ENCODE measurements at regions of chr3 and their contacts with region 1.

Region 1: DNA sequence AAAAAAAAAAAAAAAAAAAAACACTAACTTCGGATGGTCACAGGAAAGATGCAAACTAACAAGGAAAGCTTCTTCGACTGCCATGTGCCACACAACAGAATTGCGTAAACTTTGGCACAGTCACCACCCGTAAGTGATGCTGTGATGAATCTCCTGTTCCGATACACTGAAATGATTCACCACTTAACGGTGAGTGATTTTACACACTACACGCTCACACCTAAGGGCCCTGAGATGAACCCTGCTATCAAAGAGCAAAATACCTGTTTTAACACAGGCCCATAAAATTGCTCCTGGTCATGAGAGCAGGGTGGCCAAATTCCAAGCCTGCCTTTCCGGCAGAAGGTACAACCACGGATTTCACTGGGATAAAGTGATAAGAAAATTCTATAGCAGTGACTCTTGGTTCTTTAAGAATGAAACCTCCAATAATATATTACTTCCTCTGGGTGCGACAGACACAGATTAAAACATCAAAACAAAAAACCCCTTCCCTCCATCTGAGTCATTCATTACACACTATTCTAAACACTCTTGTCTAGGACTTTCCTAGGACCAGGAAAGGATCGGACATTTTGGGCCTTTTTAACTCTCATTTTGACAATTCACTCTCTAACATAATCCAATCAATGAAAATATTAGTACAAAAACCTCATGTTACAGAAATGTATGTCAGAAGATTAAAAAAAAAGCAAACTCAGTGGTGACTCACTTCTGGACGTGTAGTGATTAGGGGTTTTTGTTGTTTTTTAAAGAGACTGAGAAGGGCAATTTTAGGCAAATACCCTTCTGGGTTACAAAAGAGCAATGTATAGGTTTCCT is 28.3 kb downstream of the LRIG1 start:
- DNase-seq: peak; percentile 38
- H3K4me3 Mint-ChIP-seq: peak overlapping the region; percentile 56
- H3K27ac Mint-ChIP-seq: peak overlapping the region; percentile 89
- H3K4me1 Mint-ChIP-seq: peaks cover 57% of the 10 kb centered on the region
- H3K27me3 Mint-ChIP-seq: no peaks in the 10 kb centered on the region

Region 2: GRCh38 chr3:66483406-66483906 is 10.9 kb after region 1 on chr3:
- CTCF ChIA-PET with region 1: interaction called, 25 read pairs
- POLR2A ChIA-PET with region 1: interaction called, 4 read pairs
- DNase-seq: peak; percentile 19
- H3K4me3 Mint-ChIP-seq: peak overlapping the region; percentile 2
- H3K27ac Mint-ChIP-seq: peak overlapping the region; percentile 14
- H3K4me1 Mint-ChIP-seq: peaks cover 48% of the 10 kb centered on the region
- H3K27me3 Mint-ChIP-seq: no peaks in the 10 kb centered on the region

Region 3: GRCh38 chr3:66490214-66490613 is 17.7 kb after region 1 on chr3:
- CTCF ChIA-PET with region 1: interaction called, 25 read pairs
- POLR2A ChIA-PET with region 1: no interaction called
- DNase-seq: peak; percentile 40
- H3K4me3 Mint-ChIP-seq: peak overlapping the region; percentile 57
- H3K27ac Mint-ChIP-seq: peak overlapping the region; percentile 86
- H3K4me1 Mint-ChIP-seq: peaks cover 89% of the 10 kb centered on the region
- H3K27me3 Mint-ChIP-seq: peaks cover 2% of the 10 kb centered on the region

Region 4: DNA sequence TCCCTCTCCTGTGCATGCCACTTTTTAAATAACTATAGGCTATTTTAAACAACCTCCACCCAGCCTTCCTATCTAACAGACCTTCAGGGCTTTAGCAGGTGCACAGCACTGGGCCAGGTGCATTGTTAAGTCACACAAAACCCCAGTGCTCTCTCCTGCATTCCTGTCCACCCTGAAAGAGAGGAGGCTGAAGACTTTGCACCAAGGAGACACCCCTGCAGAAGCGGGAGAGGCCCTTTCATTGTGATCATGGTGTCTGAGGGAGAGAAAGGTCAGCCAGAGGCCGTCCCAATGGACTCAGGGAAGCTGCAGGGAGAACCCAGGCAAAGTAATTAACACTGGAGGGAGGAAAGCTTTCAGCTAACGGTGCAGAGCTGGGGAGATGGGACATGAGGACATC is 23.1 kb after region 1 on chr3:
- CTCF ChIA-PET with region 1: interaction called, 25 read pairs
- POLR2A ChIA-PET with region 1: no interaction called
- DNase-seq: no peak
- H3K4me3 Mint-ChIP-seq: no peak overlapping the region
- H3K27ac Mint-ChIP-seq: peak overlapping the region; percentile 58
- H3K4me1 Mint-ChIP-seq: peaks cover 86% of the 10 kb centered on the region
- H3K27me3 Mint-ChIP-seq: peaks cover 9% of the 10 kb centered on the region